Calu3 (cell line): ENCODE measurements at regions of chr13 and their contacts with region 1.

Region 1: DNA sequence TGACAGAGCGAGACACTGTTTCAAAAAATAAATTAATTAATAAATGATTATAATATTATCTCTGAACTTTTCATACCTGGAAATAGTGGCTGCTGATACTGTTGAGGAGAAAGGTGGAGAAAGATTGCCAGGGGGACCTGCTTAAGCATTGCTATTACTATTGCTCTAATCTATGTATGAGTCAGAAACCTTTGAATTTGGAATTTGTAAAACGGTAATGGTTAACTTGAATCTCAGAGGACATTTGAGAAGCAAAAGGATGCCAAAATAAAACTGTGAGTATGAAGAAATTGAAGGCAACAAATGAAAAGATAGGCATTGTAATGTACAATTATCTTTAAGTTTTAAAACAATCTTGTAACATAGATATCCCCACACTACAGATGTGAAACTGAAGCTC is 5.2 kb downstream of the MRPL57 start:
- DNase-seq: no peak
- H3K4me3 Mint-ChIP-seq: no peak overlapping the region
- H3K27ac Mint-ChIP-seq: no peak overlapping the region
- H3K4me1 Mint-ChIP-seq: no peaks in the 10 kb centered on the region
- H3K27me3 Mint-ChIP-seq: no peaks in the 10 kb centered on the region
- CTCF ChIP-seq: no peak

Region 2: DNA sequence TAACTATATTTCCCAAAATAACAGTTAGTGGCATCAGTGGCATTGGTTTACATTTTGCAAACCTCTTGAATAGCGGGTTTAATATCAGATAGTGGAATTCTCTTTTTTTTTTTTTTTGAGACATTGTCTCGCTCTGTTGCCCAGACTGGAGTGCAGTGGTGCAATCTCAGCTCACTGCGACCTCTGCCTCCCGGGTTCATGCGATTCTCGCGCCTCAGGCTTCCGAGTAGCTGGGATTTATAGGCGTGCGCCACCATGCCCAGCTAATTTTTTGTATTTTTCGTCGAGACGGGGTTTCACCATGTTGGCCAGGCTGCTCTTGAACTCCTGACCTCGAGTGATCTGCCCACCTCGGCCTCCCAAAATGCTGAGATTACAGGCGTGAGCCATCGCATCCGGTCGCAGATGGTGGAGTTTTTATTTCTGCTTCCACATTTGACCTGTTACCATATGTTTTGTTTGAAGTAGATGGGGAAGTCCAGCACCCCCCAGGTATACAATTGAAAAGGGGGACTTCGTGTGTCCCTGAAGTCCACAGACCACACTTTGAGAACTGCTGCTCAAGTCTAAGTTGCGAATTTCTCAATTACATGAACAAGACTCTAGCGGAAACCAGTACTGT is 238.6 kb before region 1 on chr13:
- CTCF ChIA-PET with region 1: interaction called, 3 read pairs
- intact Hi-C with region 1: loop called (anchors 2 kb)
- DNase-seq: no peak
- H3K4me3 Mint-ChIP-seq: no peak overlapping the region
- H3K27ac Mint-ChIP-seq: peak overlapping the region; percentile 53
- H3K4me1 Mint-ChIP-seq: peaks cover 7% of the 10 kb centered on the region
- H3K27me3 Mint-ChIP-seq: no peaks in the 10 kb centered on the region
- CTCF ChIP-seq: no peak